Psoas muscle (tissue), 8 donors: ENCODE measurements at regions of chr3 and their contacts with region 1.

Region 1: GRCh38 chr3:131502530-131503245 is at the start of gene MRPL3:
- DNase-seq: peak; percentile 87 to 93
- ATAC-seq: peak; percentile 96 to 99 (median 98)
- H3K4me3 ChIP-seq: peak within 1 kb of the TSS; percentile 91
- H3K27ac ChIP-seq: peak within 1 kb of the TSS; percentile 85
- H3K4me1 ChIP-seq: peaks cover 15% of the 10 kb centered on the region
- H3K27me3 ChIP-seq: no peaks in the 10 kb centered on the region
- CTCF ChIP-seq: no peak
- total RNA-seq, gene MRPL3: 53.0 to 95.3 (median 82.4) TPM

Region 2: DNA sequence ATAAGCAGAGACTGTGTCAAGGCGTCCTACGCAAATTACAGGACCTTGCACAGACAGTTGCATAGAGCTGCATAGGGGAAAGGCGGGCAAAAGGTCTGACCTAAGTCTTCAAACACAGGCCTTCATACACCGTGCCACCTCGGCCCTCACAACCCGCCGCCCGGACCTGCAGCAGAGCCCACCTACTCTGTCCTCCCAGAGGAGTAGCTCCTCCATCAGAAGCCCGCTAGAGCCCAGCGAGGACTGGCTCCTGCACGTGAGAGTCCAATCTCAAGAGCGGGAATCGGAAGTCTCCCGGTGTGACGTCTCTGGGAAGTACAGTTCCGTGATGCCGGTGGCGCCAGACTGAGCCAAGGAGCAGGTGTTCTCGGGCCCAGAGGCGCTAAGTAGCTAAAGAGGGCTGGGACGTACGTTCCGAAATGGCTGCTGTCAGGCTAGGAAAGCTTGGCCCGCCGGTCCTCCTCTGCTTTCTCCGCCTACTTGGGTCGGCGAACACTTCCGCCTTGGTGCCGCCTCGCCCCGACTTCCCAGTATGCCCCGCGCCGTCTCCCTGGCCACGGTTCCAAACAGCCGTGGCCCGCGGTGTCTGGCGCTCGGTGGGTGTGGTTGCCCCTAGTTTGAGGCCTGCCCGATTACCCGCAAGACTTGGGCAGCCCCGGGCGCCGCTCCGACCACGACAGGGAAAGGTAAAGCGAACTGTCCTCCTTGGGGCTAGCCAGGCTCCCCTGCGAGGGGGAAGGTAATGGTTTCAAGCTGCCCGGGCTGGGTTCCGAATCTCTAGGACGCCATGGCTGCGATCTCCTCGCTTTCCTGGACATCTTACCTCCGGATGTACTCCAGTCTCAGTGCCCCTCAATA is 476.1 kb before region 1 on chr3 and contains the starts of genes ASTE1 and NEK11:
- intact Hi-C with region 1: loop called in 1 of 2 experiments (anchors 5 kb)
- DNase-seq: peak; percentile 89 to 94
- ATAC-seq: peak; percentile 97 to 100 (median 98)
- H3K4me3 ChIP-seq: peak within 1 kb of the TSS; percentile 77
- H3K27ac ChIP-seq: peak within 1 kb of the TSS; percentile 86
- H3K4me1 ChIP-seq: peaks cover 8% of the 10 kb centered on the region
- H3K27me3 ChIP-seq: no peaks in the 10 kb centered on the region
- CTCF ChIP-seq: no peak
- total RNA-seq, gene ASTE1: 1.7 to 2.5 (median 2.3) TPM
- total RNA-seq, gene NEK11: 1.6 to 2.9 (median 2.2) TPM

Region 3: GRCh38 chr3:131178710-131179375 is 323.8 kb before region 1 on chr3:
- intact Hi-C with region 1: no loop called
- DNase-seq: no peak
- ATAC-seq: no peak
- H3K4me3 ChIP-seq: no peak overlapping the region
- H3K27ac ChIP-seq: no peak overlapping the region
- H3K4me1 ChIP-seq: no peaks in the 10 kb centered on the region
- H3K27me3 ChIP-seq: no peaks in the 10 kb centered on the region
- CTCF ChIP-seq: no peak

Region 4: DNA sequence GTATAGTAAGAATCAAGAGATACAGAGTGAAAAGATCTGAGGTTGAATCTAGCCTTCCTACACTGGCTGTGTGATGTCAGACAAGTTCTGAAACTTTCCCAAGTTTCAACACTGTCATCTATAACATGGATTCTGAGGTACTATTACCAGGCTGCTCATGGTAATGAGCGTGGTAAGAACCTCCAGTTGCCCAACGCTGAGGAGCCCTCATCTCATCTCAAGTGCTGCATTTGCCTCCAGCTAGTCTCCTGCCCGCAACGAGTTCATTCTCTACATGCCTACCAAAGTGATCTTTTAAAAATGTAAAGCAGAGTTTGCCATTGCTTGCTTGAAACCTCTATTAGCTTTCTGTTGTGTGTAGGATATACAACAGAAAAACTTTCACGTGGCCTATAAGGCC is 307.9 kb before region 1 on chr3:
- intact Hi-C with region 1: no loop called
- DNase-seq: no peak
- ATAC-seq: no peak
- H3K4me3 ChIP-seq: no peak overlapping the region
- H3K27ac ChIP-seq: no peak overlapping the region
- H3K4me1 ChIP-seq: no peaks in the 10 kb centered on the region
- H3K27me3 ChIP-seq: no peaks in the 10 kb centered on the region
- CTCF ChIP-seq: no peak

Region 5: GRCh38 chr3:131250466-131250865 is 252.2 kb before region 1 on chr3:
- intact Hi-C with region 1: no loop called
- DNase-seq: no peak
- ATAC-seq: no peak
- H3K4me3 ChIP-seq: no peak overlapping the region
- H3K27ac ChIP-seq: no peak overlapping the region
- H3K4me1 ChIP-seq: no peaks in the 10 kb centered on the region
- H3K27me3 ChIP-seq: no peaks in the 10 kb centered on the region
- CTCF ChIP-seq: no peak

Region 6: GRCh38 chr3:131518680-131519079 is 16.0 kb after region 1 on chr3:
- intact Hi-C with region 1: no loop called
- DNase-seq: no peak
- ATAC-seq: no peak
- H3K4me3 ChIP-seq: no peak overlapping the region
- H3K27ac ChIP-seq: no peak overlapping the region
- H3K4me1 ChIP-seq: no peaks in the 10 kb centered on the region
- H3K27me3 ChIP-seq: no peaks in the 10 kb centered on the region
- CTCF ChIP-seq: no peak